Dendritic cell treated with granulocyte-macrophage colony-stimulating factor and Interleukin-4, amounts not matched to agents 40 ng/mL and 50 ng/mL, for 4 days (primary cell): ENCODE measurements at regions of chr7 and their contacts with region 1.

Region 1: DNA sequence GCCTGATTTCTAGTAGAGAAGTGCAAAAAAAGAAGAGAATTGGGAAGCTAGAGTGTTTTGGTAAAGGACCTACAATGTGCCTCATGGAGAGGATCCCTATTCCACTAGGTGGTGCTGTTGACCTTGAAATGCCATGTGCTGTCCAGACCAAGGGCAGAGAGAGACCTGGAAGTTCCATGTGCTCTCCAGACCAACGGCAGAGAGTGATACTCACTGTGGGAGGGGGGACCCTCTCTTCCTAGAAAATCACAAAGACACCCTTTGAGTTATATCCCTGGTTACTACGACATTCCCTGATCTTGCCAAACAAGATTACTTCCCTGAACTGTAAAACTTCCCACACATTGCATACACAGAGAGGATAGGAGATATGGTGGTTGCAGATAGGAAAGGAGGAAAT is 212.7 kb upstream of the ZNF804B start:
- H3K4me3 Mint-ChIP-seq: no peak overlapping the region
- H3K27ac Mint-ChIP-seq: no peak overlapping the region
- H3K4me1 Mint-ChIP-seq: no peaks in the 10 kb centered on the region
- H3K27me3 Mint-ChIP-seq: no peaks in the 10 kb centered on the region

Region 2: DNA sequence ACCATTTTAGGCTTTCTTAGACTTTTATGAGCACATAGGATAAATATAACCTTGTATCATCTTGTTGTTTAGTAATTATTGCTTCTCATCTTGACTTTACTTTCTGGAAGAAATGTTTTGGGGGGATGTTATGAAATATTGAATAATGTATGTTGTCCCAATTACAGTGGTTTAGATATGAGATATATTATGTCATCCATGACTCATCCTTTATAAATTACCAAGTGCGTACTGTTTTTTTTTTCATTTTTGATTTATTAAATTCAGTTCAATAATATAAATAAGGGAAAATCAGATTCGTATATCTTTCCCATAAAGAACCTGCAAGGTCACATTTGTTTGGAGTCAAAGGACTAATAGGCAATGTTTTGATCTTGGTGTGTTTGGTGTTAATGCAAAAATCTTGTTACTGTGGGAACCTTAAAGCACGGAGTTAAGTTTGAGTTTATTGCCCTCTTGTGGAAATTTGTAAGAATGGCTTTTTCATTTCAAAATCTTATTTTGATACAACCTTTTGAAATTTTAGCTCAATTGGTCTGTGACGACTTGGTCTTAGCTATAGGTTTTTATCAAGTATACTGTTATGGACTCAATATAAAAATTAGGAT is 435.6 kb before region 1 on chr7:
- intact Hi-C with region 1: no loop called
- H3K4me3 Mint-ChIP-seq: no peak overlapping the region
- H3K27ac Mint-ChIP-seq: no peak overlapping the region
- H3K4me1 Mint-ChIP-seq: peaks cover 7% of the 10 kb centered on the region
- H3K27me3 Mint-ChIP-seq: no peaks in the 10 kb centered on the region

Region 3: DNA sequence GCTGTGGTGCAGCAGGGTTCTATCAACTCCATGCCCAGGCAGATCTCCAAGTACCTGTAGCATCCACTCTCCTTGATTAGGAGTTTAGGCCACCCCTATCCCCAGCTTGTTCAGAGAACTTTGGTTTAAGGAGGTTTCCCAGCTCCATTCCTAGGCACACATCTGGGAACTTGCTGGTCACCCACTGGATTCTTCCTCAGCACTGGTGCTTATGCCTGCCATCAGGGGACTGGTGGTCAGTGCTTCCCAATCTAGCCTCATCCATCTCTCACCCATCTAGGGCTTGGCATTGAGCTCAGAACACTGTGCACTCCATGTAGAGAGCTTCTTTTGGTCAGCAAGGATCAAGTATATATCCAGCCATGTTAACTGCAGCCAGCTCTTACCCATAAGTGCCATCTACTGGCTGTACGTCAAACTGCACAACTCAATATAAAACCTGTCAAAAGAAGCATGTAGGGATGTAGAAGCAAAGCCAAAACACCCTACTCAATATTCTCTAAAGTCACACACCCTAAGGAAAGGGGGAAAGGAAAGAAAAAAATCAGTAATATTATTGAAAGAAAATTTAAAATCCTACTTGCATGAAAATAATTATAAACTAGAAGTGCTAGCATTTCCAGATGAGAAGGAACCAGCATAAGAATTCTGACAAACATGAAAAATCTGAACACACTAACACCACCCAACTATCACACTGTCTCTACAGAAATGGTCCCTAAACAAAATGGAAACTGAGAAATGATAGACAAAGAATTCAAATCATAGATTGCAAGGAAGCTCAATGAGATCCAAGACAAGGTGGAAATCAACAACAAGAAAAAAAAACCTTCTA is 1076.2 kb after region 1 on chr7:
- intact Hi-C with region 1: loop called (anchors 5 kb)
- H3K4me3 Mint-ChIP-seq: no peak overlapping the region
- H3K27ac Mint-ChIP-seq: no peak overlapping the region
- H3K4me1 Mint-ChIP-seq: no peaks in the 10 kb centered on the region
- H3K27me3 Mint-ChIP-seq: no peaks in the 10 kb centered on the region